ENCODE measurements at regions of chr1 and their contacts with region 1.

Region 1: DNA sequence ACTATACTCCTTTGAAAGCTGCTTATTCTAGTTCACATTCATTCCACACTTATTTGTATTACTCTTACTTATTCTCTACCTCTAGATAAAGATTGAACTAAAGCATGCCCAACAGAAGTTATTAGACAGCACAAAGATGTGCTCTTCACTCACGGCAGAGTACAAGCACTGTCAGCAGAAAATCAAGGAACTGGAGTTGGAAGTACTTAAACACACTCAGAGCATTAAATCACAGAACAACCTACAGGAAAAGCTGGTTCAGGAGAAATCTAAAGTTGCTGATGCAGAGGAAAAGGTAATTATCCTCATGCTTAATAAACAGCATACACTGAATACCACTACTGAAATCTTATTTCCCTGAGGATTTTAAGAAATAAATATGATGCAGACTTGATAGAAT is 81.3 kb upstream of the PPIH start:
- DNase-seq: no peak
- H3K4me3 ChIP-seq: no peak overlapping the region
- H3K27ac ChIP-seq: no peak overlapping the region
- H3K4me1 ChIP-seq: no peaks in the 10 kb centered on the region
- H3K27me3 ChIP-seq: no peaks in the 10 kb centered on the region
- CTCF ChIP-seq: no peak
- POLR2A ChIP-seq: no peak

Region 2: GRCh38 chr1:42618866-42619265 is 41.9 kb after region 1 on chr1:
- intact Hi-C with region 1: no loop called
- DNase-seq: no peak
- H3K4me3 ChIP-seq: no peak overlapping the region
- H3K27ac ChIP-seq: no peak overlapping the region
- H3K4me1 ChIP-seq: no peaks in the 10 kb centered on the region
- H3K27me3 ChIP-seq: no peaks in the 10 kb centered on the region
- CTCF ChIP-seq: no peak
- POLR2A ChIP-seq: no peak

Region 3: GRCh38 chr1:42756956-42757891 is 180.3 kb after region 1 on chr1:
- intact Hi-C with region 1: loop called (anchors 5 kb)
- DNase-seq: peak; percentile 9 to 29
- H3K4me3 ChIP-seq: no peak overlapping the region
- H3K27ac ChIP-seq: no peak overlapping the region
- H3K4me1 ChIP-seq: no peaks in the 10 kb centered on the region
- H3K27me3 ChIP-seq: no peaks in the 10 kb centered on the region
- CTCF ChIP-seq: peak; percentile 18 to 71 (median 60)
- POLR2A ChIP-seq: no peak

Region 4: GRCh38 chr1:42924082-42924850 is 347.3 kb after region 1 on chr1:
- intact Hi-C with region 1: no loop called
- DNase-seq: peak; percentile 96 to 97
- H3K4me3 ChIP-seq: peak overlapping the region; percentile 43 to 97 (median 73)
- H3K27ac ChIP-seq: peak overlapping the region; percentile 84 to 98 (median 90)
- H3K4me1 ChIP-seq: peaks cover 4 to 7% of the 10 kb centered on the region in 2 donors
- H3K27me3 ChIP-seq: no peaks in the 10 kb centered on the region
- CTCF ChIP-seq: peak in 1 of 6 experiments; percentile 3
- POLR2A ChIP-seq: peak in 1 of 2 donors; percentile 93

Region 5: DNA sequence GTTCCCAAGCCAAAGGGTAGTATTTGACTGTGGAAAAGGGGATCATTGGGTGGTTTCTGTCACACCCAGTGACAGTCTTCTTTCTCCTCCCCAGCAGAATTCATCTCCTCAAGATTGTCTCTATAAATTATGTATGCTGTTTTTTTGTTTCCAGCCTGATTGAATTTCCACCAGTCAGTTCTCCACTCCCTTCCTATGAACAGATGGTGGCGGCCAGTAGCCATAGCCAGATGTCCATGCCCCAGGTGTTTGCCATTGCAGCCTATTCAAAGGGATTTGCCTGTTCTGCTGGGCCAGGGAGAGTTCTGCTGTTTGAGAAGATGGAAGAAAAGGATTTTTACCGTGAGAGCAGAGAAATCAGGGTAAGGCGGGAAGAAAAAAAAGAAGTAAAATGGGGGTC is 608.1 kb after region 1 on chr1:
- intact Hi-C with region 1: no loop called
- DNase-seq: no peak
- H3K4me3 ChIP-seq: no peak overlapping the region
- H3K27ac ChIP-seq: no peak overlapping the region
- H3K4me1 ChIP-seq: no peaks in the 10 kb centered on the region
- H3K27me3 ChIP-seq: no peaks in the 10 kb centered on the region
- CTCF ChIP-seq: no peak
- POLR2A ChIP-seq: no peak

Measured in thyroid gland (tissue), 4 donors.